H1 (cell line): ENCODE measurements at regions of chr16 and their contacts with region 1.

Region 1: DNA sequence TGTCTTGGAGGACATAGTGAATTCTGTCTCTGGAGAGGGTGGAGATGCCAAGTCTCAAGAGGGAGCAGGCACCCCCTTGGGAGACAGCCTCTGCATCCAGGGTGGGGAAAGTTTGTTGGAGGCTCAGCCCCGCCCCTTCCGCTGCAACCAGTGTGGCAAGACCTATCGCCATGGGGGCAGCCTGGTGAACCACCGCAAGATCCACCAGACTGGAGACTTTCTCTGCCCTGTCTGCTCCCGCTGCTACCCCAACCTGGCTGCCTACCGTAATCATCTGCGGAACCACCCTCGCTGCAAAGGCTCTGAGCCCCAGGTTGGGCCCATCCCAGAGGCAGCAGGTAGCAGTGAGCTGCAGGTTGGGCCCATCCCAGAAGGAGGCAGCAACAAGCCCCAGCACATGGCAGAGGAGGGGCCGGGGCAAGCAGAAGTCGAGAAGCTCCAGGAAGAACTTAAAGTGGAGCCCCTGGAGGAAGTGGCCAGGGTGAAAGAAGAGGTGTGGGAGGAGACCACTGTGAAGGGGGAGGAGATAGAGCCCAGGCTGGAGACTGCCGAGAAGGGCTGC is 5.2 kb downstream of the ZNF646 start:
- DNase-seq: no peak
- H3K4me3 ChIP-seq: no peak overlapping the region
- H3K27ac ChIP-seq: no peak overlapping the region
- H3K4me1 ChIP-seq: no peaks in the 10 kb centered on the region
- H3K27me3 ChIP-seq: no peaks in the 10 kb centered on the region
- CTCF ChIP-seq: peak in 2 of 3 experiments; percentile 10 to 12; a peak in 1 of 4 replicates
- EP300 ChIP-seq: no peak
- POLR2A ChIP-seq: no peak
- RAD21 ChIP-seq: peak in 1 of 2 experiments; percentile 15; a peak in 1 of 4 replicates

Region 2: GRCh38 chr16:31094424-31095120 is 15.1 kb after region 1 on chr16 and contains the start of gene VKORC1:
- CTCF ChIA-PET with region 1: interaction called, 14 read pairs
- POLR2A ChIA-PET with region 1: interaction called, 26 read pairs
- DNase-seq: peak; percentile 90 to 92
- H3K4me3 ChIP-seq: peak within 1 kb of the TSS; percentile 87 to 96 (median 92)
- H3K27ac ChIP-seq: peak within 1 kb of the TSS; percentile 16; the same call in 1 of the 2 replicates
- H3K4me1 ChIP-seq: peaks cover 0 to 9% (median 3%) of the 10 kb centered on the region in 4 experiments; a peak in 4 of 7 replicates
- H3K27me3 ChIP-seq: no peaks in the 10 kb centered on the region
- CTCF ChIP-seq: no peak
- EP300 ChIP-seq: no peak
- POLR2A ChIP-seq: peak in 1 of 2 experiments; percentile 36; a peak in 1 of 3 replicates
- RAD21 ChIP-seq: no peak
- total RNA-seq, gene VKORC1: 83.3 and 84.1 TPM in 2 replicates